Psoas muscle (tissue), 8 donors: ENCODE measurements at regions of chr14 and their contacts with region 1.

Region 1: DNA sequence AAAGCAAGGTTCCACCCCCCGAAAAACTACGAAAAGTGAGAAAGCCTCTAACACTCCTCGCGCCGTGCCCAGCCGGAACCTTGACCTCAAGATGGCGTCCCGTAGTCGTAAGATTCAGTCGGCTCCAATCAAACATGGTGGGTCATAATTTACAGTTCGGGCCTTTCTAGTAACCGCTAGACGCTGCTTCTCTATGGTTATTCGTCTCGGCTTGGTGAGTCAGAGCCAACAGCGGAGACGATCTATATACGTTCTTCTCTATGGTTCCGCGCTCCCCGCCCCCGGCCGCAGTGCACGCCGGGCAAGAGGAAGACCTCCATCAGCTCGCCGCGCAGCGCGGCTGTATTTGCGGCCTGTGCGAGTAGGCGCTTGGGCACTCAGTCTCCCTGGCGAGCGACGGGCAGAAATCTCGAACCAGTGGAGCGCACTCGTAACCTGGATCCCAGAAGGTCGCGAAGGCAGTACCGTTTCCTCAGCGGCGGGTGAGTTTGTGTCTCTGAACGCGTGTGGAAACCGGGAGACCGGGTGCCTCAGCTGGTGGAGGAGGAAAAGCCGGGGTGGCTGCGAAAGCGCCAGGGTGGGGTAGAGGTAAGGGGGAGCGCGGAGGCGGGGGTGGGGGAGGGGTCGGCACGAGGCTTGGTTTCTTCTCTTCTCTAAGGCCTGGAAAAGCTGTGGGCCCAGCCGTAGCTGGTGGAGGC is at the start of gene RBM25:
- DNase-seq: peak; percentile 94 to 97
- ATAC-seq: peak; percentile 97 to 99 (median 99)
- H3K4me3 ChIP-seq: peak within 1 kb of the TSS; percentile 75
- H3K27ac ChIP-seq: peak within 1 kb of the TSS; percentile 94
- H3K4me1 ChIP-seq: peaks cover 14% of the 10 kb centered on the region
- H3K27me3 ChIP-seq: no peaks in the 10 kb centered on the region
- CTCF ChIP-seq: no peak
- total RNA-seq, gene RBM25: 31.1 to 50.2 (median 41.0) TPM

Region 2: GRCh38 chr14:73026845-73027542 is 31.4 kb before region 1 on chr14 and contains the start of gene ZFYVE1:
- intact Hi-C with region 1: loop called in 1 of 2 experiments (anchors 2 kb)
- DNase-seq: peak; percentile 97 to 98
- ATAC-seq: peak; percentile 99 to 100 (median 100)
- H3K4me3 ChIP-seq: peak within 1 kb of the TSS; percentile 83
- H3K27ac ChIP-seq: peak within 1 kb of the TSS; percentile 86
- H3K4me1 ChIP-seq: peaks cover 30% of the 10 kb centered on the region
- H3K27me3 ChIP-seq: no peaks in the 10 kb centered on the region
- CTCF ChIP-seq: no peak
- total RNA-seq, gene ZFYVE1: 15.4 to 17.9 (median 17.6) TPM